Activated CD4-positive, alpha-beta T cell treated with anti-CD3 and anti-CD28 coated beads for 36 hours (primary cell): ENCODE measurements at regions of chr19 and their contacts with region 1.

Region 1: GRCh38 chr19:34677386-34678084 is at the start of gene ZNF302:
- DNase-seq: peak; percentile 97
- ATAC-seq: peak; percentile 86
- H3K4me3 Mint-ChIP-seq: peak within 1 kb of the TSS; percentile 81
- H3K27ac Mint-ChIP-seq: peak within 1 kb of the TSS; percentile 99
- H3K4me1 Mint-ChIP-seq: peaks cover 23% of the 10 kb centered on the region
- H3K27me3 Mint-ChIP-seq: no peaks in the 10 kb centered on the region
- total RNA-seq, gene ZNF302: 17.1 to 17.6 TPM

Region 2: GRCh38 chr19:34364830-34365462 is 312.6 kb before region 1 on chr19 and contains the start of gene GPI:
- CTCF ChIA-PET with region 1: no interaction called
- POLR2A ChIA-PET with region 1: interaction called, 5 read pairs
- intact Hi-C with region 1: loop called in 1 of 2 experiments (anchors 1 kb)
- DNase-seq: peak; percentile 86
- ATAC-seq: peak; percentile 87
- H3K4me3 Mint-ChIP-seq: peak within 1 kb of the TSS; percentile 91
- H3K27ac Mint-ChIP-seq: peak within 1 kb of the TSS; percentile 90
- H3K4me1 Mint-ChIP-seq: peaks cover 52% of the 10 kb centered on the region
- H3K27me3 Mint-ChIP-seq: no peaks in the 10 kb centered on the region
- total RNA-seq, gene GPI: 686 to 839 TPM

Region 3: DNA sequence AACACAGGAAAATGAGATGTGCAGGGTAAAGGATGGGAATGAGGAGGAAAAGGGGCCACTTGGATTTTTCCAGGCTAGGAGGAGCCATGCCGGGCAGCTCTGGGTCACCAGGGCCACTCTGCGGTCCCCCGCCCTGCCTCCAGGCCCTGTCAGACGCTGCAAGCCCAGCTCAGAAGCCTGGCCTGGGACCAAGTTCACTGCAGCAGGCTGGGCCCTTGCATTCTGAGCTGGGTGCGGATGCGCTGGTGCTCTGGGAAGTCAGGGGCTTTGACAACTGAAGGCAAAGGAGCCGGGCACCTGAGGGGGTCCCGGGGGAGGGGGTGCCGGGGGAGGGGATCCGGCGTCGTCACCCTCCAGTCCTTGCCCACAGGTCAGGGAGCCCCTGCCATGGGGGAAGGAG is 118.5 kb before region 1 on chr19:
- CTCF ChIA-PET with region 1: no interaction called
- POLR2A ChIA-PET with region 1: no interaction called
- intact Hi-C with region 1: no loop called
- DNase-seq: no peak
- ATAC-seq: no peak
- H3K4me3 Mint-ChIP-seq: no peak overlapping the region
- H3K27ac Mint-ChIP-seq: no peak overlapping the region
- H3K4me1 Mint-ChIP-seq: no peaks in the 10 kb centered on the region
- H3K27me3 Mint-ChIP-seq: peaks cover 24% of the 10 kb centered on the region

Region 4: GRCh38 chr19:34577531-34578107 is 99.9 kb before region 1 on chr19:
- CTCF ChIA-PET with region 1: no interaction called
- POLR2A ChIA-PET with region 1: no interaction called
- intact Hi-C with region 1: no loop called
- DNase-seq: no peak
- ATAC-seq: no peak
- H3K4me3 Mint-ChIP-seq: no peak overlapping the region
- H3K27ac Mint-ChIP-seq: no peak overlapping the region
- H3K4me1 Mint-ChIP-seq: no peaks in the 10 kb centered on the region
- H3K27me3 Mint-ChIP-seq: peaks cover 19% of the 10 kb centered on the region

Region 5: DNA sequence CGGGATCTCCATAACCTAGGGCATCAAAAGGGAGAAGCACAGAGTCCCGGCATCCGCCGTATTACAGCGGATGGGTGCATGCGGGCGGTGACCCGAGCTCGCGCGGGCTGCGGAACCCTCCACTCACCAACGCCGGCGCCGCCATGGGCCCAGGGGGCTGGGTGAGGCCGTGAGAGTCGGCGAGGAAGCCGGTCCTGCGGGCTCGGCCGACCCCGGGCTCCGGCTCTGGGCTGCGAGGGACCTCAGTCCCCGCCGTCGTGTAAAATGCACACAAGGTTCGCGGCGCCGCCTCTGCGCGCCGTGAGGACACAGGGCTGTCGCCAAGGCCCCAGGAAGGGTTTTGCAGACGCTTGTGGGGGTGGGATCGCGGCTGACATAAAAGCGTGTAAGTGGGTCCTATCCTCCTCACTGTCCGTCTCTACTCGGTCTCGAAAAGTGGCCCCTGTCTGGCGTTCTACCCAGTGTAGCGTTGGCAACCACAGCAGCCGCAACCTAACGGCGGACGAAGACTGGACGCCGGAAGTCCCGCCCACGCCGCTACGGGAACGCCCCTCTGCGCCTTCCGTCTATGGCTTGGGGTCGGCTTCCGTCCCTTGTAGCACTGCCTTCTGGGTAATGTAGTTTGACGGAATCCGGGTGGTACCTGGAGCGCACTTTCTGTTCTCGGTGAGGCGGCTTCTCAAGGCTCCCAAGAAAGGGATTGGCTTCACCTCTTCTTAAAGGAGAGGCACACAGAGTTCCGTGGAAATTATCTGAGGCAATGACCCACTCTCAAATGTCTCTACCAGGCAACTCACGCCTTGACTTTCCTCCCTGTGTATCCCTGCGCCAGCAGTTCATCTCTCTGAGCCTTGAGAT is 95.4 kb after region 1 on chr19 and contains the start of gene ZNF599:
- CTCF ChIA-PET with region 1: no interaction called
- POLR2A ChIA-PET with region 1: no interaction called
- intact Hi-C with region 1: loop called (anchors 1 kb)
- DNase-seq: peak; percentile 94
- ATAC-seq: peak; percentile 97
- H3K4me3 Mint-ChIP-seq: peak within 1 kb of the TSS; percentile 83
- H3K27ac Mint-ChIP-seq: peak within 1 kb of the TSS; percentile 86
- H3K4me1 Mint-ChIP-seq: peaks cover 11% of the 10 kb centered on the region
- H3K27me3 Mint-ChIP-seq: peaks cover 9% of the 10 kb centered on the region
- total RNA-seq, gene ZNF599: 3.5 to 3.7 TPM

Region 6: DNA sequence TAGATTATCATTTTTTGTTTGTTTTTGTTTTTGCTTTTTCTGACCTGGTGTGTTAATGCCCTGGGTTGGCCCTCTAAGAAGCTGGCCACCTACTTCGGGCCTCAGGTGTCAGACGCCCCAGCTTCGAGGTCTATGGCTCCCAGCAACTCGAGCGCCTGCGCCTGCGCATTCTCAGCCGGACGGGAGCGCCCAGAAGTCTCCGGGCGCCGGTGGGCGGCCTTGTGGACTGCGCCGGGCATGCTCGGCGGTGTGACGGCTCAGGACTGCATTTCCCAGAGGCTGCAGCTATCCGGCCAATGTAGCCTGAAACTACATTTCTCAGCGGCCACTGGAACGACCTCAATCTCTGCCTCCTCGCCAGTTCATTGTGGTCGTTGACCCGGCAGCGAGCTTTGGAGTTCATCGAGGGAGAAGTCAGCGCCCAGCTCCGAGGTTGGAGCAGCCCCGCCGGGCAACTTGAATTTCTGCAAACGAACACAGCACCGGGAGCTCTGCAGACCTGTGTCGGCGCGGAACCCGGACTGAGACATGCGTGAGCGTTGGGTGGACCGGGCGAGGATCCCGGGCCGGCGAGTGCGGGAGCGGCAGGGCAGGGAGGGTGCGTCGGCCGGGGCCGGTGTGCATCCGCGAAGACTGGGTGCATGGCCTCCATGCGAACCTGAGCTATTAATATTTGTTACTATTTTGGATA is 249.3 kb after region 1 on chr19 and contains the start of gene ZNF30:
- CTCF ChIA-PET with region 1: interaction called, 4 read pairs
- POLR2A ChIA-PET with region 1: no interaction called
- intact Hi-C with region 1: loop called in 1 of 2 experiments (anchors 2 kb)
- DNase-seq: peak; percentile 92
- ATAC-seq: peak; percentile 100
- H3K4me3 Mint-ChIP-seq: peak within 1 kb of the TSS; percentile 93
- H3K27ac Mint-ChIP-seq: peak within 1 kb of the TSS; percentile 77
- H3K4me1 Mint-ChIP-seq: peaks cover 12% of the 10 kb centered on the region
- H3K27me3 Mint-ChIP-seq: no peaks in the 10 kb centered on the region
- total RNA-seq, gene ZNF30: 5.7 to 6.2 TPM

Region 7: GRCh38 chr19:34999498-35000341 is 322.2 kb after region 1 on chr19 and contains the start of gene GRAMD1A:
- CTCF ChIA-PET with region 1: no interaction called
- POLR2A ChIA-PET with region 1: no interaction called
- intact Hi-C with region 1: loop called in 1 of 2 experiments (anchors 1 kb)
- DNase-seq: peak; percentile 87
- ATAC-seq: peak; percentile 55
- H3K4me3 Mint-ChIP-seq: peak within 1 kb of the TSS; percentile 100
- H3K27ac Mint-ChIP-seq: peak within 1 kb of the TSS; percentile 100
- H3K4me1 Mint-ChIP-seq: peaks cover 69% of the 10 kb centered on the region
- H3K27me3 Mint-ChIP-seq: no peaks in the 10 kb centered on the region
- total RNA-seq, gene GRAMD1A: 185 to 227 TPM